Natural killer cell (primary cell): ENCODE measurements at regions of chr13 and their contacts with region 1.

Region 1: GRCh38 chr13:101514788-101515187 is 62.3 kb downstream of the ITGBL1 start:
- DNase-seq: peak in 1 of 2 donors; percentile 70
- ATAC-seq: no peak
- H3K4me3 ChIP-seq: no peak overlapping the region
- H3K4me3 Mint-ChIP-seq: no peak overlapping the region
- H3K27ac ChIP-seq: no peak overlapping the region
- H3K27ac Mint-ChIP-seq: no peak overlapping the region
- H3K4me1 ChIP-seq: no peaks in the 10 kb centered on the region
- H3K4me1 Mint-ChIP-seq: no peaks in the 10 kb centered on the region
- H3K27me3 ChIP-seq: no peaks in the 10 kb centered on the region
- H3K27me3 Mint-ChIP-seq: no peaks in the 10 kb centered on the region
- CTCF ChIP-seq: peak; percentile 47

Region 2: DNA sequence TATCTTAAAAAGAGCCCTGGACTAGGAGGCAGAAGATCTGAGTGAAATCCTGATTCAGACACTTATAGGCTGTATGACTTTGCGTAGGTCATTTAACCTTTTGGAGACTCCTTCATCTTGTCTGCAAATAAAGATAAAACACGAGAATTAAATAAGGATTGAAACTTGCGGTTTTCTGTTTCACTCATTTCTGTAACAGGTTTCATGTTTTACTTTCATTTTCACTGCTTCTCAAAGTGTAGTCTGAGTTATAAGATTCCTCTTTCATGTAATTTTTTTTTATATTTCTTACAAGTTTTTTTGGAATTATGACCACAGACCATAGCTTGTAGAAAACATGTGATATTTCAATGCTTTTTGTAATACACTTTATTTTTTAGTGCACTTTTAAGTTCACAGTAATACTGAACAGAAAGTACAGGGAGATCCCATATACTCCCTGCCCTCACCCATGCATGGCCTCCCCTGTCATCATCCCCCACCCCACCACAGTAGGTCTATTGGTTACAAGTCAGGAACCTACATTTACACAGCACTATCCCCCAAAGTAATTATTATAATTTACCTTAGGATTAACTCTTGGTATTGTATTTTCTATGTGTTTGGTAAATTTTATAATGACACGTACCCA is 112.3 kb after region 1 on chr13:
- intact Hi-C with region 1: no loop called
- DNase-seq: peak in 1 of 2 donors; percentile 49
- ATAC-seq: peak; percentile 67 to 79 (median 75)
- H3K4me3 ChIP-seq: peak overlapping the region; percentile 33
- H3K4me3 Mint-ChIP-seq: peak overlapping the region; percentile 75
- H3K27ac ChIP-seq: peak overlapping the region; percentile 67
- H3K27ac Mint-ChIP-seq: peak overlapping the region; percentile 82 to 85
- H3K4me1 ChIP-seq: peaks cover 10% of the 10 kb centered on the region
- H3K4me1 Mint-ChIP-seq: peaks cover 24 to 32% of the 10 kb centered on the region in 2 donors
- H3K27me3 ChIP-seq: no peaks in the 10 kb centered on the region
- H3K27me3 Mint-ChIP-seq: peaks cover 0 to 9% of the 10 kb centered on the region in 2 donors
- CTCF ChIP-seq: no peak

Region 3: GRCh38 chr13:101757446-101758039 is 242.8 kb after region 1 on chr13:
- intact Hi-C with region 1: loop called (anchors 1 kb)
- DNase-seq: peak in 1 of 2 donors; percentile 55
- ATAC-seq: peak in 1 of 3 donors; percentile 44
- H3K4me3 ChIP-seq: no peak overlapping the region
- H3K4me3 Mint-ChIP-seq: no peak overlapping the region
- H3K27ac ChIP-seq: no peak overlapping the region
- H3K27ac Mint-ChIP-seq: no peak overlapping the region
- H3K4me1 ChIP-seq: no peaks in the 10 kb centered on the region
- H3K4me1 Mint-ChIP-seq: no peaks in the 10 kb centered on the region
- H3K27me3 ChIP-seq: no peaks in the 10 kb centered on the region
- H3K27me3 Mint-ChIP-seq: peaks cover 0 to 4% of the 10 kb centered on the region in 2 donors
- CTCF ChIP-seq: no peak

Region 4: DNA sequence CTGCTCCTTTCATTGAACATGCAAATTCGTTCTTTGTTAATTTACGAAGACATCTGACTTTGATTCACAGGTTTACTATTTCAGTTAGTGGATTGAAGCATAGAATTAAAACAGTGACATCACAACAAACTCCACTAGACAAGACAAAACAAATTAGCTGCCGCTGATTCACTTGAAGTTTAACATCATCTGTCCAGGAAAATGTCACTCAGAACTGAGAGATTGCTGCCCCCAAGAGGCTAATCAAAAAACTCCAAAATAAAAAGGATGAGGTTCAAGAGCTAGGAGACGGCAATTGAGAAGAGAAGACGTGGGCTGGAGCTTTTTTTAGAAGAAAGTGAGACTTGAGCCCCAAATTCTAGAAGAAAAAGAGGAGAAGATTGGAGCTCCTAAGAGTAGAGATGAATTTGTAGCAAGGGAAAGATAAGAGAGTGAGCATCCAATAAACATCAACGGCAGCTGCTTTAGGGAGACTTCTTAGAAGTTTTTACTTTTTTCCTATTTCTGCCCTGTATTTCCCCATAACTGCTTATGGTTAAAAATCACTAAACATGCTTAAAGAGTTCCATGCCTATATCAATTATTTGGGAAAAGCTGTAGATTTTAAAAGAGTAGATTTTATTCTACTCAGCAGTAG is 1041.2 kb after region 1 on chr13:
- intact Hi-C with region 1: loop called (anchors 10 kb)
- DNase-seq: peak in 1 of 2 donors; percentile 54
- ATAC-seq: peak in 1 of 3 donors; percentile 47
- H3K4me3 ChIP-seq: no peak overlapping the region
- H3K4me3 Mint-ChIP-seq: no peak overlapping the region
- H3K27ac ChIP-seq: no peak overlapping the region
- H3K27ac Mint-ChIP-seq: no peak overlapping the region
- H3K4me1 ChIP-seq: no peaks in the 10 kb centered on the region
- H3K4me1 Mint-ChIP-seq: peaks cover 0 to 6% of the 10 kb centered on the region in 2 donors
- H3K27me3 ChIP-seq: no peaks in the 10 kb centered on the region
- H3K27me3 Mint-ChIP-seq: peaks cover 6 to 12% of the 10 kb centered on the region in 2 donors
- CTCF ChIP-seq: peak; percentile 41